ENCODE measurements at regions of chr17 and their contacts with region 1.

Region 1: DNA sequence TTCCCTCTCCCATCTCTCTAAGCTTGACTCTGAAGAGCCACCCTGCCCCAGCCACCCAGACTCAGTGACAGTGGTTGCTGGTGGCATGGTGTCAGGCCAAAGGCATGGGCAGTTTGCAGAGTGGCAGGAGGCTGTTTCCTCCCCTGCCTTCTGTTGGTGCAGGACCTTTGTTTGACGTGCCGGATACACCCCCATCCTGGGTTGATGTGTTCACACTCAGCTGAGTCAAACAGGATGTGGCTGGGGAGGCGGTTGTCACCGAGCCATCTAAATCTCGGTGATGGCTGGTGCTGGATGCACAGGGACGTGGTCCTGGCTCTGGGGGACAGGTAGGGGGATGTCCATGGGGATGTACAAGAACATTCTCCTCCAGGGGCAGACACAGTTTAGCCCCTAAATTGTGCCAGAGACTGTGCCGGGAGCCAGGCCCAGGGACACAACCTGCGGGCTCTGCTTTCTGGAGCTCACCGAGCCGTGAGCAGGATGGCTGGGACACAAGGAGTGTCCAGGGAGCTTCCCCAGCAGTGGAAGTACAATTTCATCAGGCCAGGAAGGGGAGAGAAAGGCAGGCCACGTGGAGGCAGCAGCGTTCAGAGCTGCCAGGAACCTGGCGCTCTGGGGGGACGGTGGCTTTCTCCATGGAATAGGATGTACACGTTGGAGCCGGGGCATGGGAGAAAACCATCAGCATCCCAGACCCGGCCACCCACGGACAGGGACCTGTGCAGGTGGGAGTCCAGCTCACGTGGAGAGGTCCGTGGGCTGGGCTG is 264.2 kb downstream of the SEC14L1 start:
- DNase-seq: peak; percentile 48 to 86 (median 84)
- ATAC-seq: peak; percentile 88
- H3K4me3 ChIP-seq: peak overlapping the region; percentile 66
- H3K4me3 Mint-ChIP-seq: peak overlapping the region; percentile 83 to 100 (median 95)
- H3K27ac ChIP-seq: peak overlapping the region; percentile 81
- H3K27ac Mint-ChIP-seq: peak overlapping the region; percentile 95 to 100 (median 97)
- H3K4me1 ChIP-seq: peaks cover 89 to 91% of the 10 kb centered on the region in 2 donors
- H3K4me1 Mint-ChIP-seq: peaks cover 71 to 97% (median 87%) of the 10 kb centered on the region in 7 donors
- H3K27me3 ChIP-seq: no peaks in the 10 kb centered on the region
- H3K27me3 Mint-ChIP-seq: no peaks in the 10 kb centered on the region

Region 2: DNA sequence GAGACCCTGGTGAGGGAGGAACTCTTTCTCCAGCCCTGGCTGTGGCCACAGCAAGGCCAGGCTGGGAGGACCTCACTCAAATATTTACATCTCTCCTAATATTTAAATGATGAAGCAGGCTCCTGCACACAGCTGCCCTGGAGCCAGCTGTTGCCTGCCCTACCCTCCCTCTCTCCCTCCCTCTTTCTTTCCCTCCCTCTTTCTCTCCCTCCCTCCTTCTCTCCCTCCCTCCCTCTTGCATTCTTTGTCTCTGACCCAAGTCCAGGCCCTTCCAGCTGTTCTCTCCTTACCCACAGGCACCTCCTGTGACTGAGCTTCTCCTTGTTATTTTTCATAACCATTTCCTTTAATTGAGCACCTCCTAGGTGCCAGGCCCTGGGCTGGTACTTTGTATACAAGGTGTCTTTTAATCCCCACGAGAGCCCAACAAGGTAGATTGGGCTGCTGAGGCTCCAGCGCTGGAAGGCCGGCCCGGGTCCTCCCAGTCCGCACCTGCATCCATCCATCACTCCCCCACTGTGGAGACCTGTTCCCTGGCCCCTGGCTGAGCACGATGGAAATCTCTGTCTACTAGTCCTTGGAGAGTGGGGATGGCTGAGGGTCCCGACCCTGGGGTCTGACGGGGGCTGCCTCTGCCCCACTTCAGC is 21.9 kb before region 1 on chr17:
- CTCF ChIA-PET with region 1: interaction called, 23 read pairs
- POLR2A ChIA-PET with region 1: interaction called, 3,353 read pairs
- intact Hi-C with region 1: loop called (anchors 1 to 2 kb)
- DNase-seq: no peak
- ATAC-seq: no peak
- H3K4me3 ChIP-seq: peak overlapping the region; percentile 17
- H3K4me3 Mint-ChIP-seq: peak overlapping the region; percentile 60 to 90 (median 86)
- H3K27ac ChIP-seq: peak overlapping the region; percentile 58
- H3K27ac Mint-ChIP-seq: peak overlapping the region; percentile 76 to 94 (median 93)
- H3K4me1 ChIP-seq: peaks cover 73 to 83% of the 10 kb centered on the region in 2 donors
- H3K4me1 Mint-ChIP-seq: peaks cover 59 to 94% (median 89%) of the 10 kb centered on the region in 7 donors
- H3K27me3 ChIP-seq: no peaks in the 10 kb centered on the region
- H3K27me3 Mint-ChIP-seq: no peaks in the 10 kb centered on the region

Region 3: GRCh38 chr17:77391668-77392375 is 13.2 kb before region 1 on chr17:
- CTCF ChIA-PET with region 1: interaction called, 23 read pairs
- POLR2A ChIA-PET with region 1: interaction called, 3,353 read pairs
- intact Hi-C with region 1: loop called in 1 of 2 experiments (anchors 1 kb)
- DNase-seq: peak in 4 of 9 donors; percentile 42 to 59 (median 48)
- ATAC-seq: no peak
- H3K4me3 ChIP-seq: peak overlapping the region; percentile 14
- H3K4me3 Mint-ChIP-seq: peak overlapping the region; percentile 61 to 87 (median 74)
- H3K27ac ChIP-seq: peak overlapping the region; percentile 50
- H3K27ac Mint-ChIP-seq: peak overlapping the region; percentile 65 to 95 (median 89)
- H3K4me1 ChIP-seq: peaks cover 68 to 79% of the 10 kb centered on the region in 2 donors
- H3K4me1 Mint-ChIP-seq: peaks cover 64 to 91% (median 82%) of the 10 kb centered on the region in 7 donors
- H3K27me3 ChIP-seq: no peaks in the 10 kb centered on the region
- H3K27me3 Mint-ChIP-seq: no peaks in the 10 kb centered on the region

Region 4: DNA sequence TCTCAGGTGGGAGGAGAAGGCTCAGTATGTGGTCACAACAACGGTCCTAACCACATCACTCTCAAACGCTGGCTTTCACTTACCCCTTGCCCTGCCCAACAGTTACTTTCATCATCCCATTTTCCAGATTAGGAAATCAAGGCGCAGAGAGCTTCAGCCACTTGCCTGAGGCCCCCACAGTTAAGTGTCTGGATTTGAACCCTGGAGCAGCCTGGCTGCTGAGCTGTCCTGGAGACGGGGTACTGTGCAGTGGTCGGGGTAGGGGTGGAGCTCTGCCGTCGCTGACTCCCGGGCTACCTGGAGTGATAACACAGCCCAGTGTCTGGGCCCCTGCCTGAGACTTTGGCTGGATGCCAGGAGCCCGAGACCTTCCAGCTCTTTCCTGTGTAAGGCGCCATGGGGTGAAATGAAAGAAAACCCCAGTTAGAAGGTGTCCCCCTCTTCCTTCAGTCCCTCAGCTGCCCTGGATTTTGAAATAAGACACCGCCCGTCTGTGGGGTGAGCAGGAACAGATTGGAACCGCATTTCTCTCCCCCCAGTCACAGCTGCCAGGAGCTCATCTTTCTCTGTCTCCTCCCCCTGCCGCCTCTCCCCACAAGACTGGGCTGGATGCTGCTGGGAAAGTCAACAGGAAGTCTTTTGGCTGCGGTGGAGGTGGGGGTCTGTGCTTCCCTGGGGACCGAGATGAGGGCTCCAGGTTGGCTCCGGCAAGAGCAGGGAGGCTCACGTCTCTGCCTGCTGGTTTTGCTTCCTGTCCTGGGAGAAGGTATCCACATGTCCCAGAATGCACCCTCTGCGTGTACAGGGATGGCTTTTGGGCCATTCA is 16.0 kb after region 1 on chr17:
- CTCF ChIA-PET with region 1: interaction called, 114 read pairs
- POLR2A ChIA-PET with region 1: interaction called, 3,353 read pairs
- intact Hi-C with region 1: loop called (anchors 2 kb)
- DNase-seq: peak in 7 of 9 donors; percentile 50 to 65 (median 58)
- ATAC-seq: peak; percentile 56
- H3K4me3 ChIP-seq: peak overlapping the region; percentile 53
- H3K4me3 Mint-ChIP-seq: peak overlapping the region; percentile 79 to 88 (median 85)
- H3K27ac ChIP-seq: peak overlapping the region; percentile 53
- H3K27ac Mint-ChIP-seq: peak overlapping the region; percentile 82 to 97 (median 94)
- H3K4me1 ChIP-seq: peaks cover 44 to 57% of the 10 kb centered on the region in 2 donors
- H3K4me1 Mint-ChIP-seq: peaks cover 22 to 73% (median 60%) of the 10 kb centered on the region in 7 donors
- H3K27me3 ChIP-seq: no peaks in the 10 kb centered on the region
- H3K27me3 Mint-ChIP-seq: no peaks in the 10 kb centered on the region

Region 5: GRCh38 chr17:77456951-77457548 is 52.1 kb after region 1 on chr17:
- CTCF ChIA-PET with region 1: interaction called, 9 read pairs
- POLR2A ChIA-PET with region 1: interaction called, 3,353 read pairs
- intact Hi-C with region 1: loop called in 1 of 2 experiments (anchors 2 kb)
- DNase-seq: peak in 3 of 9 donors; percentile 17 to 44 (median 40)
- ATAC-seq: peak; percentile 35
- H3K4me3 ChIP-seq: peak overlapping the region; percentile 77
- H3K4me3 Mint-ChIP-seq: peak overlapping the region; percentile 92 to 100 (median 98)
- H3K27ac ChIP-seq: peak overlapping the region; percentile 92
- H3K27ac Mint-ChIP-seq: peak overlapping the region; percentile 93 to 100 (median 98)
- H3K4me1 ChIP-seq: peaks cover 46 to 57% of the 10 kb centered on the region in 2 donors
- H3K4me1 Mint-ChIP-seq: peaks cover 34 to 76% (median 48%) of the 10 kb centered on the region in 7 donors
- H3K27me3 ChIP-seq: no peaks in the 10 kb centered on the region
- H3K27me3 Mint-ChIP-seq: no peaks in the 10 kb centered on the region

Region 6: DNA sequence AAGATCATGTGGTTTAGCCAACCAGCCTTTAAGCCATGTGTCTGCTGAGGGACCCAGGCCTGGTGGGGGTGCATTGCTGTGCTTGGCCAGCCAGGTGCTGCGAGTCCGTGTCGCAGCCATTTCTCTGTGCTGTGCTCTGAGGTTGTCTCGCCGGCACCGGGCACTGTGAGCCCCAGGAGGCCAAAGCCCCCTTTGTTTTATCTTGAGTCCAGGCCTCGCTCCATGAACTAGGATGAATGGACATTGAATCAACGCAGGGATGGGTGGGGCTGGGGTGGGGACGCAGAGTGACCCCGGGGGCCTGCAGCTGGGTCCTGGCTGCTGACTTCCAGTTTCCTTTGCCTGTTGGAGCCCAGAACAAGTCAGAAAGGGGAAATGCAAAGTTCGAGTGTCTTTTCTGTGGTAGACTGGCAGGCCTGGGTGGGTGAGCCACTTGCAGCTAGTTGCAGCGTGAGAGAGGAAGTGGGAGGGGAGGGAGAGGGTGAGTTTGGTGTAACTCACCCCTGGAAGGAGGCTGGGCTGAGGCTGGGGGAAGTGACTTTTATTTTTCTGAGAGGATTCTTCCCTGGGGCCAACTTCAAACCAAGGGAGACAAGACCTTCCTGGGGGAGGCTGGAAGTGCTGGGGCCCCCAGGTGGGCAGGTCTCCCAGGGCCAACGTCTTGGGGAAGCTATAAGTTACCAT is 60.5 kb after region 1 on chr17:
- CTCF ChIA-PET with region 1: interaction called, 9 read pairs
- POLR2A ChIA-PET with region 1: interaction called, 26 read pairs
- intact Hi-C with region 1: no loop called
- DNase-seq: peak in 8 of 9 donors; percentile 67 to 89 (median 87)
- ATAC-seq: peak; percentile 97
- H3K4me3 ChIP-seq: peak overlapping the region; percentile 54
- H3K4me3 Mint-ChIP-seq: peak overlapping the region; percentile 79 to 87 (median 84)
- H3K27ac ChIP-seq: peak overlapping the region; percentile 64
- H3K27ac Mint-ChIP-seq: peak overlapping the region; percentile 88 to 100 (median 94)
- H3K4me1 ChIP-seq: peaks cover 88 to 90% of the 10 kb centered on the region in 2 donors
- H3K4me1 Mint-ChIP-seq: peaks cover 74 to 96% (median 86%) of the 10 kb centered on the region in 7 donors
- H3K27me3 ChIP-seq: no peaks in the 10 kb centered on the region
- H3K27me3 Mint-ChIP-seq: no peaks in the 10 kb centered on the region

Region 7: GRCh38 chr17:77542551-77543490 is 137.8 kb after region 1 on chr17:
- CTCF ChIA-PET with region 1: no interaction called
- POLR2A ChIA-PET with region 1: no interaction called
- intact Hi-C with region 1: no loop called
- DNase-seq: peak; percentile 32 to 72 (median 62)
- ATAC-seq: peak; percentile 87
- H3K4me3 ChIP-seq: no peak overlapping the region
- H3K4me3 Mint-ChIP-seq: no peak overlapping the region
- H3K27ac ChIP-seq: no peak overlapping the region
- H3K27ac Mint-ChIP-seq: no peak overlapping the region
- H3K4me1 ChIP-seq: peaks cover 0 to 5% of the 10 kb centered on the region in 2 donors
- H3K4me1 Mint-ChIP-seq: peaks cover 0 to 7% (median 0%) of the 10 kb centered on the region in 7 donors
- H3K27me3 ChIP-seq: no peaks in the 10 kb centered on the region
- H3K27me3 Mint-ChIP-seq: peaks cover 0 to 37% (median 5%) of the 10 kb centered on the region in 5 donors